Gastrocnemius medialis (tissue), 4 donors: ENCODE measurements at regions of chr6 and their contacts with region 1.

Region 1: DNA sequence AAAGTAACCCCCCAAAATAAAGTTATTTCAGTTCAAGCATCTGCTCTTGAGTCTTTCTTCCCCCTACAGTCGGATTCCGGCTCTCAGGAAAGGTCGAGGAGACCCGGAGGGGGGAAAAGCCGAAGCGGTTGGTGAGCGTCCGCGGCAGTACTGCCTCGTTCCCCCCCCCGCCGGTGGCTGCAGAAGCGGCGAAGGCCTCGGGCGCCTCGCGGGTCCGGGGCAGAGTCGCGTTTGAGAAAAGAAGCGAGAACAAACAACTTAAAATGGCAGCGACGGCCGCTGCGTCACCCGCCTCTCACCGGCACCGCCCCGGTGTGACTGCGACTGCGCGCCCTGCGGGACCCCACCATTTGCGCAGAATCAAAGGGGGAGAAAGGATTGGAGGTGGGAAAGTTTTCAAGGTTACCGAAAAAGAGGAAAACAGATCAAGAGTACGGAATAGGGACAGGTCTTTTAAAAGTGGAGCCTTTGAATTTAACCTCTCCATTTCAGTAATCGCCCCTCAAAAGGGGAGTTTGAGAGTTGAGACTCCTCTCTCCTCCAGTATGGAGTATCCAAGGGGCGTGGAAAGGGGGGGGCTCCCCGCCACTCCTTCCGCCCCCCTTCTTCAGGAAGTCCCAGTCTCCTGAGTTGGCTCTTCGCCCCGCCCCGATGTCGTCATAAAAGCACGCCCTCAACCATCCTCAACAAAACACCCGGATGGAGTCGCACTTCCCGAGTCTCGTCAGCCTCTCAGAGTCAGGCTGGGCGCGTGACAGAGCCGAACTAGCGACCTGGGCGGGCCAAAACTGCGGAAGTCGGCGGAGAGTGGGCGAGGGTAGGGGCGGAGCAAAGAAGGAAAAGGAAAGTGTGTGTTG is 1.9 kb upstream of the C6orf62 start:
- DNase-seq: peak; percentile 100
- ATAC-seq: peak; percentile 85 to 88
- H3K4me3 ChIP-seq: peak overlapping the region; percentile 82 to 99 (median 87)
- H3K27ac ChIP-seq: peak overlapping the region; percentile 93 to 100 (median 98)
- H3K4me1 ChIP-seq: peaks cover 29 to 37% of the 10 kb centered on the region in 2 donors
- H3K27me3 ChIP-seq: no peaks in the 10 kb centered on the region
- CTCF ChIP-seq: peak in 2 of 5 experiments; percentile 23 to 26
- POLR2A ChIP-seq: peak; percentile 99 to 100

Region 2: DNA sequence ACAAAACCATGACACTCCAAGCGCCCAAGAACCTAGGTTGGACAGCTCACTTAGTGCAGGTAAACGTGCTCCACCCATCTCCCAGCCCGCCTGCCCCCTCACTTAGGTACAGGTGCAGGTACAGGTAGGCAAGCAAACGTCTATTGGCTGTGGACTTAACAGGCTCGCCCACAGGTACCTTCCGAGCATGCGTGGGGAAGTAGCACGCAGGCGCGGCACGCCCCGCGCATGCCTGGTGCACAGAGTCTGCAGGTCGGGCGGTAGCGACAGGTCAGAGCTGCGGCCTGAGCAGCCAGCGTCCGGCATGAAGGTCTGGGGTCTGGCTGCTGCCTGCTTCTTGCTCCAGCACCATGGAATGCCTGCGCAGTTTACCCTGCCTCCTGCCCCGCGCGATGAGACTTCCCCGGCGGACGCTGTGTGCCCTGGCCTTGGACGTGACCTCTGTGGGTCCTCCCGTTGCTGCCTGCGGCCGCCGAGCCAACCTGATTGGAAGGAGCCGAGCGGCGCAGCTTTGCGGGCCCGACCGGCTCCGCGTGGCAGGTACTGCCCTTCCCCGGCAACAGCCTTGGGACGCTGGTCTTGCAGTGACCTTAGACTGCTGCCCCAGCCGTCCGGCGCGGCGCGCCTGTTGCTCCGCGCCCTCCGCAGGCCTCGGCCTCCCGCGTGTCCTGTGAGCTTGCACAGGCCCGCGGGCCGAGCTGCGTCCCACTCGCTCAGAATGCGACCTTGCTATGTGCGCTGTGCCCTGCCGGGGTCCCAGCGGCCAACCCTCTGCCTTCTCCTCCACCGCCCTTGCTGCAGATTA is 317.9 kb before region 1 on chr6 and contains the start of gene MRS2:
- in situ Hi-C with region 1: loop called in 2 of 4 experiments (anchors 10 to 25 kb)
- intact Hi-C with region 1: no loop called
- DNase-seq: peak; percentile 81 to 89
- ATAC-seq: peak; percentile 95 to 97
- H3K4me3 ChIP-seq: peak within 1 kb of the TSS; percentile 72 to 97 (median 88)
- H3K27ac ChIP-seq: peak within 1 kb of the TSS; percentile 83 to 98 (median 92)
- H3K4me1 ChIP-seq: peaks cover 20 to 30% of the 10 kb centered on the region in 2 donors
- H3K27me3 ChIP-seq: no peaks in the 10 kb centered on the region
- CTCF ChIP-seq: no peak
- POLR2A ChIP-seq: peak; percentile 80 to 90
- total RNA-seq, gene MRS2: 17.2 to 63.2 (median 44.2) TPM

Region 3: DNA sequence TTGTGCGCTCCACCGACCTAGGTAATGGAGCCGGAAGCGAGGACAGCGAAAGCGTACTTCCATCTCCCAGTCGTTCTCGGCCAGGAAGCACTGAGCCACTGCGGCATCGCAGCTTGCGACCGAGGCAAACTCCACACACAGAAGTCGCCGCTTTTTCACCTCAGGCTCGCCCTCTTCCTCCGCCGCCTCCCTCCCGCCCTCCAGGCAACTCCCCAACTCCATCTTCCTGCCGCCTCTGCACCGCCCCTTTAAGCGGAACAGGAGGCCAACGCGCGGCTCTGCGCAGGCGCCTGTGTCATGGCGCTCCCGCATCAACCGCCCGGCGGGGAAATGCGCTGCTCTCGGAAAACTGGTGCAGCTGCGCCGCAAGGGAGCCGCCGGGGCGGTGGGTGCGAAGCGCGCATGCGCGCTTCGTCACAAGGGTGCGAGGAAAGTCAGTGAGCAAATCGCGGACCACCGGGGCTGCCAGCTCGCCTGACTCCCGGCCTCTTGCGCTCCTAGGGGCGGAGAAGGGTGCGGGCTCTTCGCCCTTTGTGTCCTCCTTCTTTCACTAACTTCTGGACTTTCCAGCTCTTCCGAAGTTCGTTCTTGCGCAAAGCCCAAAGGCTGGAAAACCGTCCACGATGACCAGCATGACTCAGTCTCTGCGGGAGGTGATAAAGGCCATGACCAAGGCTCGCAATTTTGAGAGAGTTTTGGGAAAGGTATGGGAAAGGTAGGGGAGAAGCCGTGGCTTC is 54.0 kb before region 1 on chr6 and contains the starts of genes ACOT13 and TDP2:
- in situ Hi-C with region 1: no loop called
- intact Hi-C with region 1: loop called (anchors 1 kb)
- DNase-seq: peak; percentile 89 to 95
- ATAC-seq: peak; percentile 91 to 94
- H3K4me3 ChIP-seq: peak within 1 kb of the TSS; percentile 76 to 95 (median 94)
- H3K27ac ChIP-seq: peak within 1 kb of the TSS; percentile 90 to 95 (median 92)
- H3K4me1 ChIP-seq: peaks cover 31 to 32% of the 10 kb centered on the region in 2 donors
- H3K27me3 ChIP-seq: no peaks in the 10 kb centered on the region
- CTCF ChIP-seq: peak; percentile 57 to 73 (median 61)
- POLR2A ChIP-seq: peak; percentile 73 to 81
- total RNA-seq, gene ACOT13: 13.6 to 28.2 (median 21.1) TPM
- total RNA-seq, gene TDP2: 17.6 to 44.2 (median 21.7) TPM

Region 4: GRCh38 chr6:24743265-24743943 is 22.6 kb after region 1 on chr6:
- in situ Hi-C with region 1: no loop called
- intact Hi-C with region 1: no loop called
- DNase-seq: no peak
- ATAC-seq: peak; percentile 45 to 71
- H3K4me3 ChIP-seq: no peak overlapping the region
- H3K27ac ChIP-seq: peak overlapping the region in 1 of 4 donors; percentile 15
- H3K4me1 ChIP-seq: no peaks in the 10 kb centered on the region
- H3K27me3 ChIP-seq: no peaks in the 10 kb centered on the region
- CTCF ChIP-seq: no peak
- POLR2A ChIP-seq: no peak

Region 5: DNA sequence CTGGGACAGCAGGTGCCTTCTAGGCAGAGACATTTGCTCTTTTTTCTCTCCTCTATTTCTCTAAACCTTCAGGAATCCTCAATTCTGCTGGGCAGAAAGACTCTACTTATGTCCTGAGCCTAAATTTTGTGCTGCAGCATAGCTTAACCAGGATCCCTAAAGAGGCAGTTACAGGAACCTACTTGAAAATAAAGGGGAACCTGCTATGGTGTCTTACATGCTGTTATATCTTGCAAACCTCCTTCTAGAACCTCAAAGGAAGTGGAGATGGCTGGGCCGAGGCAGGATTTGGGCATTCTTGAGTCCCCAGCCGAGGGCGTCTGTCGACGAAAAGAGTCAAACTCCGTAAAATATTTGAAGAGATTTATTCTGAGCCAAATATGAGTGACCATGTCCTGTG is 36.8 kb after region 1 on chr6:
- in situ Hi-C with region 1: no loop called
- intact Hi-C with region 1: no loop called
- DNase-seq: no peak
- ATAC-seq: no peak
- H3K4me3 ChIP-seq: no peak overlapping the region
- H3K27ac ChIP-seq: no peak overlapping the region
- H3K4me1 ChIP-seq: no peaks in the 10 kb centered on the region
- H3K27me3 ChIP-seq: no peaks in the 10 kb centered on the region
- CTCF ChIP-seq: no peak
- POLR2A ChIP-seq: no peak

Region 6: DNA sequence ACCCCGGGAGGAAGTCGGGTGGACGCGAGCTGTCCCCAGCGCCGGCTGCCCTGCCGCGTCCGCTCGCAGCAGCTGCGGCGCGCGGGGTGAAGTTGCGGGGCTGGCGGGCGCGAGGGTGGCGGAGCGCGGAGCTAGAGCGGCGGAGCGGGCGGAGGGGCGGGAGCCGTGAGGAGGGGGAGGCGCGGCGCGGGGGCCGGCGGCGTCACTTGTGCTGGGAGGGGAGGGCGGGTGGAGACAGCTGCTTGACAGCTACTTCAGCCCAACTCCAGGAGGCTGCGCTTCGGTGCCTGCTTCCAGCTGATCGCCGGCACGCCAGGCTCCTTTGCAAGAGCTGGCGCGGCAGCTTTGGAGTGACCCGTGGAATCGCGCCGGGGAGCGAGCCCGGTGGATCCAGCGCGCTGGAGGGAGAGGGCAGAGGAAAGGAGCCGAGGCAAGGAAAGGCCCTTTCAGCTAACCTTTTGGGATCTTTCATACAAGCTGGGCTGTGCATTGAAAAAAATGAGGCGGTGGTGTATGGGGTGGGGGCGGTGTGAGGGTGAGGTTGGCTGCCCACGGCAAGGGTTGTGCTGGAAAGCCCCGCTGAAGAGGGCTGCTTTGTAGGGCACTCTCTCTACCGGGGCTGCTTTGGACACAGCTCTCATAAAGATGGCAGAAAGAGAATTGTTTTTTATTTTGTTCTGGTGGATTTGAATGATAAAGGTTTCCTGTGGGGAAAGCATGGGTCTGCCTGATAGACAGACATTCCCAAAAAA is 190.3 kb after region 1 on chr6:
- in situ Hi-C with region 1: no loop called
- intact Hi-C with region 1: loop called (anchors 5 kb)
- DNase-seq: peak; percentile 66 to 85
- ATAC-seq: peak; percentile 61 to 69
- H3K4me3 ChIP-seq: peak overlapping the region; percentile 59 to 82 (median 72)
- H3K27ac ChIP-seq: peak overlapping the region; percentile 87 to 93 (median 89)
- H3K4me1 ChIP-seq: peaks cover 36% of the 10 kb centered on the region in 2 donors
- H3K27me3 ChIP-seq: no peaks in the 10 kb centered on the region
- CTCF ChIP-seq: no peak
- POLR2A ChIP-seq: peak; percentile 52 to 66